ENCODE measurements at regions of chr2 and their contacts with region 1.

Region 1: GRCh38 chr2:219278655-219279516 is at the start of gene DNAJB2:
- DNase-seq: peak; percentile 100
- total RNA-seq, gene DNAJB2: 42.0 to 45.7 TPM

Region 2: GRCh38 chr2:218395797-218396687 is 882.8 kb before region 1 on chr2:
- intact Hi-C with region 1: no loop called
- DNase-seq: peak; percentile 98

Region 3: GRCh38 chr2:219294356-219295351 is 15.8 kb after region 1 on chr2:
- intact Hi-C with region 1: loop called in 1 of 2 experiments (anchors 2 kb)
- DNase-seq: peak; percentile 96